ENCODE measurements at regions of chr6 and their contacts with region 1.

Region 1: DNA sequence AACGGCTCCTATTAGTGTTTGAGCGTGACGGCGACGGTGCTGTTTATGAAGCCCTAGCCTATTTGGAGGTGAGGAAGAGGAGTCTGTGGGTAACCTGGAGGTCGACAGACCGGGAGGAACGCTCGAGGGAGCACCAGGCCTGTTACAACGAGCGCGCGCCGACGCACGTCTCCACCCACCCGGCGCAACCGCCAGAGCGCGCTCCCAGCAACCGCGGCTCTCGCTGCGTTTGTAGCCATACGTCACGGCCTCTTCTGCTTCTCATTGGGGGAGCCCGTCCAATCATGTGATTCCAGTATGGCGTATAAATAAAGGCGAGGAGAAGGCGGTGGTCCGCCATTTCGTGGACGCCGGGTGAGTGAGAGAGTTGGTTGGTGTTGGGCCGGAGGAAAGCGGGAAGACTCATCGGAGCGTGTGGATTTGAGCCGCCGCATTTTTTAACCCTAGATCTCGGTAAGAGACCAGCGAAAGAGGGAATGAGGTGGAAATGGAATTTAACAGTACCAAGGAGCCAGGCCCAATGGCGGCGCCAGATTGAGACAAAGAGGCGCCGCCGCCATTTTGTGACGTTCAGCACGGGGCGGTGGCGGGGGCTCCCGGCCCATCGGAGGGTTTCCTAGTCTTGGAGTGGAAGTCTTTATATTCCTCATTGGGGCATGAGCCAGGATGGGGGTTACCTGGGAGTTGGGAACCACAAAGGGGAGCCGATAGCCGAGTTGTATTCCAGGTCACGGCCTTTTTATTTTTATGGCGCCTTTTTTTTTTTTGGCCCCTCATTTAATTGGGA is at the start of gene SRSF3:
- DNase-seq: peak; percentile 98
- H3K4me3 Mint-ChIP-seq: peak within 1 kb of the TSS; percentile 92
- H3K27ac Mint-ChIP-seq: peak within 1 kb of the TSS; percentile 98
- H3K4me1 Mint-ChIP-seq: peaks cover 31% of the 10 kb centered on the region
- H3K27me3 Mint-ChIP-seq: no peaks in the 10 kb centered on the region
- total RNA-seq, gene SRSF3: 250 to 269 TPM

Region 2: DNA sequence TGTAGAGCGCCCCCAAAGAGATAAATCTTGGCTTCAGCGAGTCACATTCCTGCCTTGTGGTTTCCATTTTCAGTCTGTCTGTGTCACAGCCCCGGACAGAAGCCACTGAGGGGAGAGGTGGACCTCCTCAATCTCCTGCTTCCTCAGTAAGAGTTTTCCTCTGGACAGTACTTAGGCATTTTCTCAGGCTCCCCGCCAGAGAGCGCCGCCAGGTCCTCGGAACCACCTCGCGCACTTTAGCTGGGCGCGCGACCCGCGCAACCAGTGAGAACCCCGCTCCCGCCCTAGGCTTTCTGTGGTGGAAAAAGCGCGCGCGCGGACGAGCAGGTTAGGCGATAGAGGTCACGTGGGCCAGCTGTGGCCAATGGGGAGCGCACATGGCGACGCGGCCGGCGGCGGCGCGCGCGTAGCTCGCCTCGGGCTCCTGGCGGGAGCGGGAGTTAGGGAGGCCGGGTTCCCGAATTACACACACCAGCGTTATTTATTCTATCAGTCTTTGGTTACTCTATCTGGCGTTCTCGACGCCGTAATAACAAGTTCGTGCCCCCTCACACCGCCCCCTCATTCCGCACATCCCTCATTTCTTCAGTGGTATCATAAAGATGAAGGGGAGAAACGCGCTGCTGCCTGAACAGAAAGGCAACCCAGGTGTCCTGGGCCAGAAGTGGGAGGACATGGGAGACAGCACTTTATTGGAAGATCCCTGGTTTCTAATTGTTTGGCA is 171.0 kb before region 1 on chr6:
- CTCF ChIA-PET with region 1: no interaction called
- intact Hi-C with region 1: loop called (anchors 1 kb)
- DNase-seq: peak; percentile 99
- H3K4me3 Mint-ChIP-seq: peak overlapping the region; percentile 89
- H3K27ac Mint-ChIP-seq: peak overlapping the region; percentile 95
- H3K4me1 Mint-ChIP-seq: peaks cover 15% of the 10 kb centered on the region
- H3K27me3 Mint-ChIP-seq: no peaks in the 10 kb centered on the region

Region 3: DNA sequence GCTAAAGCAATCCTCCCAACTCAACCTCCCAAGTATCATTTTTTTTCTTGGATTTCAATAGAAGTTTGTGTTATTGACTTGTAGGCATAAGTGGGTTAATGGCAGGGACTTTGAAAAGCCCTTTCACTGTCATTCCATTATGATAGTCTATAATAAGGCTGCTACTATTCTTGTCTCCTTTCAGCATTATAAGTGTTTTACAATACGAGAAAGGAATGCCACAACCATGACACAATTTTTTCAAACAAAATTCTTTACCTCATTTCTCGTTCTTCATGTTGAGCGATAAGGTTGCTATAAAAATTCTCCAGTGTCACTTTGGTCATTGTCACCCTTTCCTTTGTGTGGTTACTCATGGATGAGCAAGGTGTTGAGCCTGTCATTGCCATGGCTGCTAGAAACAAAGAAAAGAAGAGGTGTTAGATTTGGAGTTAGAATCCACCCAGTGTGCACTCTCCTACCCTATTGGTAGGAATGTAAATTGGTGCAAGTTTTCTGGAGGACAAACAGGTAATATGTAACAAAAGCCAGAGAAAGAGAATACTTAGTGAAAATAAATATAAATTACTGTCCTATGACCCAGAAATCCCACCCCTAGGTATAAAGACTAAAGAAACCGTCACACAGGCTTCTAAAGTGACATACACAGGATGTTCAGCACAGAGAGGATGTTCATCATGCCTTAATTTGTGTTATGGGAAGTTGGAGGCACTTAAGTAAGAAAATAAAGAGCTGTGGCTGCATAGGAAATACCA is 54.2 kb before region 1 on chr6:
- CTCF ChIA-PET with region 1: interaction called, 5 read pairs
- intact Hi-C with region 1: loop called (anchors 1 kb)
- DNase-seq: peak; percentile 44
- H3K4me3 Mint-ChIP-seq: peak overlapping the region; percentile 55
- H3K27ac Mint-ChIP-seq: peak overlapping the region; percentile 90
- H3K4me1 Mint-ChIP-seq: peaks cover 70% of the 10 kb centered on the region
- H3K27me3 Mint-ChIP-seq: no peaks in the 10 kb centered on the region

Region 4: DNA sequence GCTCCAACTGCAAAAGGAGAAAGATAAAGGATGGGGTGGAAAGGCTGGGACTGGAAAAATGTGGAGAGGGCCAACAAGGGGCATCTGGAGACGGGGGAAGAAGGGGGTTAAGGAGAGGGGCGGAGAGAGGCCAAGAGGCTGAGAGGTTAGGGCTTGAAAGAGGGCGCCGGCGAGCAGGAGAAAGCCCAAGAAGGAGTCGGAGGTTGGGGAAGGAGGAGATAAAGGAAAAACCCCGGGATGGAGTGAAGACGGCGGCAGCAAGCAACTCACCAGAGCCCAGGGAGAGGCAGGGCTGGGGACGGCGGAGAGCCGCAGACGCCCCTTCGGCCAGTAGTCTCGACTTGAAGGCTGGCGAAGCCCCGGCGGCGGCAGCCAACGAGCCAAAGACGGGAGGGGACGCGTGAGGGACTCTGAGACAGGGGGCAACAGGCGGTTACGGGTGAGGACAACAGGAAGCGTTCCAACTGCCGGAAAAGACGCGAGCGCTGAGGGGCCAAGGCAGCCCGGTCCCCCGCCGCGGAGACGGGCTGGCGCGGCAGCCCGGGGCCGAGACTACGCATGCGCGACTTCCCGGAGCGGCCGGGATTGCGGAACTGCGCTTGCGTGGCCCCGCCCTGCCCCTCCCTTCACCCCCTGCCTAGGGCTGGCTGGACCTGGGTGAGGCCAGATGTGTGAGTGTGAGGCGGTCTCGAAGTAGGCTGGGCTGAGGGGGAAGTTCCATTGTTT is 47.1 kb before region 1 on chr6 and contains the start of gene STK38:
- CTCF ChIA-PET with region 1: interaction called, 5 read pairs
- intact Hi-C with region 1: loop called (anchors 1 kb)
- DNase-seq: peak; percentile 95
- H3K4me3 Mint-ChIP-seq: peak within 1 kb of the TSS; percentile 97
- H3K27ac Mint-ChIP-seq: peak within 1 kb of the TSS; percentile 97
- H3K4me1 Mint-ChIP-seq: peaks cover 39% of the 10 kb centered on the region
- H3K27me3 Mint-ChIP-seq: no peaks in the 10 kb centered on the region
- total RNA-seq, gene STK38: 23.6 to 24.4 TPM

Region 5: DNA sequence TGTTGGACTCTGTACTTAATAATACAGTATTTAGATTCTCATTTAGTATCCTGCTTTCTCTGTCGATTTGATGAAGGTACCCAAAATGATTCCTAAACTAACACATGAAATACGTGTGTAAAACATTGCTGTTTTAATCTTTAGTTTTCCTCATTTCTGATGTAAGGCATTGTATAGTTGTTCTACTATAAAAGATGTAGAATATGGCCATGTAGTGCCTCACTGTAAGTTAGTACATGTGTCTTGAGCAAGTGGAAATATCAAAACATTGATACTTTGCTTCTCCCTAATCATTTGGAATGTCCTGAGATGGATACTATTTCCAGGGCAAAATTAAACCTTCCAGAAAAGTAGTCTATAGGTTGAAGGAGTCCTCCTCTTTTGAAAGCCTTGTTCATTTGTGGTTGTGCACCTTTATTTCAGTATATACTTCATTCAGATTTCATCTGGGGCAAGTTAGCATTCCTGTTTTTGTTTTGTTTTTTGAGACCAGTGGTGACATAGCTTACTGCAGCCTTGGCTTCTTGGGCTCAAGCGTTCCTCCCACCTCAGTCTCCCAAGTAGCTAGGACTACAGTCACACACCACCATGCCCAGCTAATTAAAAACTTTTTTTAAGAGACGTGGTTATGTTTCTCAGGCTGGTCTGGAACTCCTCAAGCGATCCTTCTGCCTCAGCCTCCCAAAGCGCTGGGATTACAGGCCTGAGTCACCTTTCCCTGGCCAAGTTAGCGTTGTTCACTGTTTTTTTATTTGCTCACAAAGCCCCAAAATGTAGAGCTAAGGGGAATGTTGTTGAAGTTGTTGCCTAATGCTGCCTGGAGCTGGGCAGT is 11.6 kb after region 1 on chr6:
- CTCF ChIA-PET with region 1: interaction called, 11 read pairs
- intact Hi-C with region 1: no loop called
- DNase-seq: no peak
- H3K4me3 Mint-ChIP-seq: no peak overlapping the region
- H3K27ac Mint-ChIP-seq: peak overlapping the region; percentile 62
- H3K4me1 Mint-ChIP-seq: peaks cover 80% of the 10 kb centered on the region
- H3K27me3 Mint-ChIP-seq: no peaks in the 10 kb centered on the region

Region 6: GRCh38 chr6:36885461-36886401 is 291.5 kb after region 1 on chr6 and contains the start of gene C6orf89:
- CTCF ChIA-PET with region 1: no interaction called
- intact Hi-C with region 1: loop called (anchors 1 kb)
- DNase-seq: peak; percentile 99
- H3K4me3 Mint-ChIP-seq: peak within 1 kb of the TSS; percentile 87
- H3K27ac Mint-ChIP-seq: peak within 1 kb of the TSS; percentile 92
- H3K4me1 Mint-ChIP-seq: peaks cover 33% of the 10 kb centered on the region
- H3K27me3 Mint-ChIP-seq: no peaks in the 10 kb centered on the region
- total RNA-seq, gene C6orf89: 24.2 to 24.5 TPM